Activated B cell treated with CpG ODN at 0.5 μM for 24 hours (primary cell): ENCODE measurements at regions of chr6 and their contacts with region 1.

Region 1: GRCh38 chr6:36196880-36197548 is 470 bp downstream of the BRPF3 start:
- DNase-seq: peak; percentile 100
- ATAC-seq: peak; percentile 89
- H3K4me3 Mint-ChIP-seq: peak overlapping the region; percentile 92
- H3K27ac Mint-ChIP-seq: peak overlapping the region; percentile 92
- H3K4me1 Mint-ChIP-seq: peaks cover 38% of the 10 kb centered on the region
- H3K27me3 Mint-ChIP-seq: no peaks in the 10 kb centered on the region
- CTCF ChIP-seq: no peak

Region 2: DNA sequence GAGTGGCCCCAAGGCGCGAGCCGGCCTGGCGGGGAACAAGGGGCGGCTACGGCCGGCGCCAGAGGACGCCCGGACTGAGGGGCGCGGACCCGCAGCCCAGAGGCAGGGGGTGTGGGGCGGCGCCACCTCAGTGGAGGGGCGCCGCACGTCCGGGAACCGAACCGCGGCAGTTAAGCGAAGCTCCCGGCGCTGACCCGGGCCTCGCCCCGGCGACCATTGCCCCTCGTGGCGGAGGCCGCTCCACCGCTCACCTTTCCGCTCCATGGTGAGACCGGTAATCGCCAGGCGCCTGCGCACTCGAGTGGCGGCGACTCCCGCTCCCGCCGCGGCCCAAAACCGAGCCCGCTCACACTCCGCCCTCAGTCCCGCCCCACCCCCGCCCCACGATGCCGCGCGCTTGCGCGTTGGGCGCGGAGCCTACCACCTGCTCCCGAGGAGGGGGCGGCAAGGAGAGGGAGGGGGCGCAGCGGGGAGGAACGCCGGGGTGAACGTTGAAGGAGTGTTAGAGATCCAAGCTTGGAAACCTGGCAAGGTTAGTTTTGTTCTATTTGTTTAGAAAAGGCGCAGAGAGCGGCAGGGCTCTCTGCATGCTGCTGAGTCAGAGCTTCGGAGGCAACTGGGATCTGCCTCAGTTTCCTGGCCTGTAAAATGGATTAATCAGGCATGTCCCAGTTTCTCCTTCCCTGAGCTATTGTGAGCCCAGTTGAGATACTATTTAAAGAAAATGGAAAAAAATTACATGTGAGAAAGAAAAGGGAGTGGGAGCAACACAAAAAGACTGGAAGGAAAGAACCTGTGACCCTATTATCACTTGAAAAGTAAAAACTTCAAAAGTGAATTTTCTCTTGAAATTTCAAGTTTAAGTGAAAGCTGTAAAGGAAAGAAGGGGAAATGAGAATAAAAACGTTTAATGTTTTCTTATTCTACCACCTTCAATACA is 276.0 kb before region 1 on chr6 and contains the start of gene SRPK1:
- CTCF ChIA-PET with region 1: no interaction called
- POLR2A ChIA-PET with region 1: no interaction called
- intact Hi-C with region 1: loop called (anchors 1 kb)
- DNase-seq: peak; percentile 78
- ATAC-seq: peak; percentile 88
- H3K4me3 Mint-ChIP-seq: peak within 1 kb of the TSS; percentile 92
- H3K27ac Mint-ChIP-seq: peak within 1 kb of the TSS; percentile 86
- H3K4me1 Mint-ChIP-seq: peaks cover 33% of the 10 kb centered on the region
- H3K27me3 Mint-ChIP-seq: no peaks in the 10 kb centered on the region
- CTCF ChIP-seq: no peak
- total RNA-seq, gene SRPK1: 49.6 and 51.5 TPM in 2 replicates

Region 3: DNA sequence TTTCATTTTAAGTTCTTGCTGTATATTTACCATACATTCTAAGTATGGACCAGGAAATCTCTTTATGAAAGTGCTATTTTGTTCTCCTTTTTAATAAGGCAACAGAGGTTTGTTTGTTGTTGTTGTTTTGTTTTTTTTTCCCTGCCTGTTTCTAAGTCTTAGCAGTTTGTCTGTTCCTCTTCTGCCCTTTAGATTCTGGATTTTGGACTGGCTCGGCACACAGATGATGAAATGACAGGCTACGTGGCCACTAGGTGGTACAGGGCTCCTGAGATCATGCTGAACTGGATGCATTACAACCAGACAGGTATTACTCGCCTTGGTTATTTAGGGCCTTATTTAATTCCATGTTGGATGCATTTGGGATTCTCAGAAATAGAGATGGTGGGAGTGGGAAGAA is 121.4 kb before region 1 on chr6:
- CTCF ChIA-PET with region 1: no interaction called
- POLR2A ChIA-PET with region 1: no interaction called
- intact Hi-C with region 1: loop called (anchors 5 kb)
- DNase-seq: no peak
- ATAC-seq: no peak
- H3K4me3 Mint-ChIP-seq: no peak overlapping the region
- H3K27ac Mint-ChIP-seq: peak overlapping the region; percentile 0
- H3K4me1 Mint-ChIP-seq: peaks cover 5% of the 10 kb centered on the region
- H3K27me3 Mint-ChIP-seq: no peaks in the 10 kb centered on the region
- CTCF ChIP-seq: no peak

Region 4: GRCh38 chr6:36123257-36124139 is 73.5 kb before region 1 on chr6:
- CTCF ChIA-PET with region 1: interaction called, 6 read pairs
- POLR2A ChIA-PET with region 1: interaction called, 24 read pairs
- intact Hi-C with region 1: loop called (anchors 1 kb)
- DNase-seq: peak; percentile 72
- ATAC-seq: peak; percentile 73
- H3K4me3 Mint-ChIP-seq: peak overlapping the region; percentile 41
- H3K27ac Mint-ChIP-seq: peak overlapping the region; percentile 86
- H3K4me1 Mint-ChIP-seq: peaks cover 73% of the 10 kb centered on the region
- H3K27me3 Mint-ChIP-seq: no peaks in the 10 kb centered on the region
- CTCF ChIP-seq: no peak

Region 5: DNA sequence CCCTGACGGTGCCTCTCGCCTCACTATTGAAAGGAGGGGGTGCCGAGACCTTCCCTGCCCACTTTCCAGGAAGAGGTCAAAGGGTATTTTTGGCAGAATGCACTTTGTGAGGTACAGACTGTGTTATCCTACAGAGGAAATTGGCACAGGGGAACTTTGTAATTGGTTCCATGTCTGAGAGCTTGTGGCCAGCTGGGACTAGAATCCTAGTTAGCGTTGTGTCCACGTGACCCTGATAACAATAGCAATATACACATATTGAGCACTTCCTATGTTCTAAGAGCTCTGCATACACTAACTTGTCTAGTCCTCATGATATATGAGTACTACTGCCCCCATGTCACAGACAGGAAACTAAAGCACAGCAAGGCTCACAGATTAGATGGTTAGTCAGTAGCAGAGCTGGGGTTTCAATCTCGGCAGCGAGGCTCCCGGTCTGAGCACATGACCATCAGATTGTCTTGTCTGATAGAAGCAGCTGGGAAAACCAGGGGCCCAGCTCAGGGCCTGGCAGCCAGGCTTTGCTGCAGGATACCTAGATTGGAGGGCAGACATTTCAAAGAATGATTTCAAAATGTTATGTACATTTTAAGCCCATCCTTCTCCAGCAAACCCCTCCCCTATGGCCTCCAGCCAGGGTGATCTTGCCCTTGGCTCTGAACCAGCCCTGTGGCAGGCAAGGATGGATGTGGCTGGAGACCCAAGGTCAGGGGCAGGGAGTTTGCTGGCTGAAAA is 65.3 kb before region 1 on chr6:
- CTCF ChIA-PET with region 1: interaction called, 7 read pairs
- POLR2A ChIA-PET with region 1: interaction called, 16 read pairs
- intact Hi-C with region 1: loop called (anchors 2 kb)
- DNase-seq: no peak
- ATAC-seq: peak; percentile 51
- H3K4me3 Mint-ChIP-seq: peak overlapping the region; percentile 86
- H3K27ac Mint-ChIP-seq: peak overlapping the region; percentile 69
- H3K4me1 Mint-ChIP-seq: peaks cover 53% of the 10 kb centered on the region
- H3K27me3 Mint-ChIP-seq: no peaks in the 10 kb centered on the region
- CTCF ChIP-seq: no peak

Region 6: DNA sequence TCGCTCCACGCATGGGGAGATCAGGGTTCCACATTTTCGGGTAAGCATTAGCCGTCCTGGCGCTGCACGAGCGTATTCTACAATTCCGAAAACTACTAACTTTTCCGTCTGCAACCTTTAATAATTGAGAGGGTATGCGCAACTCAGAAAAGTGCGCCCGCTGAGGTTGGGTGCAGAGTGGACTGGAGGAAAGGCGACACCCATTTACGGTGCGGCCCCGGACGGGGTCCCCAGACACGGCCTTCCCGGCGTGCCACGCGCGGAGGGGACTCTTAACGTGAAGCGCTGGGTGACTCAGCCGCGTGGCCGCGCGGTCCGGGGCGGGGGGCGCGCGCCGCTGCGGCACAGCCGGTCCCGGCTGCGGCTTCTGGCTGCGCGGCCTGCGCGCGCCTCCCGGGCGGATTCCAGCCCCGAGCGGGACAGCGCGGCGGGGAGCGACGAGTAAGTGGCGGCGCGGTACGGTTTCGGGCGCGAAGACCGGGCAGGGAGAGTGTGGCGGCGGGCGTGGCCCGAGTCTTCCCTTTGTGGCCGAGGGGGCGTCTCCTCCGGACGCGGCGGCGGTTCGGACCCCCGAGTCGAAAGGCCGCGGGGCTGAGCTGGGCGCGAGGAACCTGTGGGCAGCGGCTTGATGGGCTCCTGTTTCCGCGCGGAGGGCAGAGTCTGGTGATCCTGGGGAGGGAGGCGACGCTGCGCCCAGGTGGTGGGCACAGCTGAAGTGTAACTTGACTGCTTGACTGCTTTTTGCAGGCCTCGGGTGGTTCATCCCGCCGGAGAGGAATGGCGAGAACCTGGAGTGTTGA is 245.9 kb after region 1 on chr6 and contains the starts of genes KCTD20 and PXT1:
- CTCF ChIA-PET with region 1: no interaction called
- POLR2A ChIA-PET with region 1: no interaction called
- intact Hi-C with region 1: loop called (anchors 1 kb)
- DNase-seq: peak; percentile 85
- ATAC-seq: peak; percentile 84
- H3K4me3 Mint-ChIP-seq: peak within 1 kb of the TSS; percentile 98
- H3K27ac Mint-ChIP-seq: peak within 1 kb of the TSS; percentile 96
- H3K4me1 Mint-ChIP-seq: peaks cover 46% of the 10 kb centered on the region
- H3K27me3 Mint-ChIP-seq: no peaks in the 10 kb centered on the region
- CTCF ChIP-seq: no peak
- total RNA-seq, gene KCTD20: 45.5 and 48.1 TPM in 2 replicates
- total RNA-seq, gene PXT1: 0.11 and 0.22 TPM in 2 replicates